ENCODE measurements at regions of chr13 and their contacts with region 1.

Region 1: GRCh38 chr13:32019612-32020233 is 11.9 kb upstream of the FRY start:
- DNase-seq: peak; percentile 40
- H3K4me3 ChIP-seq: no peak overlapping the region
- H3K27ac ChIP-seq: no peak overlapping the region
- H3K4me1 ChIP-seq: no peaks in the 10 kb centered on the region
- H3K27me3 ChIP-seq: no peaks in the 10 kb centered on the region
- CTCF ChIP-seq: peak; percentile 63

Region 2: GRCh38 chr13:31909864-31910551 is 109.7 kb before region 1 on chr13:
- intact Hi-C with region 1: loop called (anchors 10 kb)
- DNase-seq: peak; percentile 62
- H3K4me3 ChIP-seq: no peak overlapping the region
- H3K27ac ChIP-seq: no peak overlapping the region
- H3K4me1 ChIP-seq: no peaks in the 10 kb centered on the region
- H3K27me3 ChIP-seq: no peaks in the 10 kb centered on the region
- CTCF ChIP-seq: peak; percentile 79

Region 3: DNA sequence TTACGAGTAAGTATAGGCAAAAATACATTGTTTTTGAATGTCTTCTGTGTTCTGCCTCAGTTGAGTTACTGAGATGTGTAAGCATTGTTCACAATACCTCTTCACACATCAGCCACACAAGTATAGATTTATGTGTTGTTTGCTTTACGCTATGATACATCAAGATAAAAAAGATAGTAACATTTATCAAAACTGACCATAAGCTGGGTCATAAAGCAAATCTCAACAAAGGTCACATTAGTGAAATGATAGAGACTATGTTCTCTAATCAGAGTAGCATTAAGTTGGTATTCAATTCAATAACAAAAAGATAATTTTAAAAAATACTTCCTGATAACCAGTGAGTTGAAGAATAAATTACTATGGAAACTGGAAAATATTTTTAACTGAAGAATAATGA is 167.9 kb after region 1 on chr13:
- intact Hi-C with region 1: no loop called
- DNase-seq: no peak
- H3K4me3 ChIP-seq: no peak overlapping the region
- H3K27ac ChIP-seq: no peak overlapping the region
- H3K4me1 ChIP-seq: no peaks in the 10 kb centered on the region
- H3K27me3 ChIP-seq: no peaks in the 10 kb centered on the region
- CTCF ChIP-seq: no peak

Region 4: GRCh38 chr13:32246468-32246867 is 226.7 kb after region 1 on chr13:
- intact Hi-C with region 1: loop called (anchors 10 kb)
- DNase-seq: peak; percentile 63
- H3K4me3 ChIP-seq: no peak overlapping the region
- H3K27ac ChIP-seq: no peak overlapping the region
- H3K4me1 ChIP-seq: no peaks in the 10 kb centered on the region
- H3K27me3 ChIP-seq: no peaks in the 10 kb centered on the region
- CTCF ChIP-seq: peak; percentile 51

Region 5: DNA sequence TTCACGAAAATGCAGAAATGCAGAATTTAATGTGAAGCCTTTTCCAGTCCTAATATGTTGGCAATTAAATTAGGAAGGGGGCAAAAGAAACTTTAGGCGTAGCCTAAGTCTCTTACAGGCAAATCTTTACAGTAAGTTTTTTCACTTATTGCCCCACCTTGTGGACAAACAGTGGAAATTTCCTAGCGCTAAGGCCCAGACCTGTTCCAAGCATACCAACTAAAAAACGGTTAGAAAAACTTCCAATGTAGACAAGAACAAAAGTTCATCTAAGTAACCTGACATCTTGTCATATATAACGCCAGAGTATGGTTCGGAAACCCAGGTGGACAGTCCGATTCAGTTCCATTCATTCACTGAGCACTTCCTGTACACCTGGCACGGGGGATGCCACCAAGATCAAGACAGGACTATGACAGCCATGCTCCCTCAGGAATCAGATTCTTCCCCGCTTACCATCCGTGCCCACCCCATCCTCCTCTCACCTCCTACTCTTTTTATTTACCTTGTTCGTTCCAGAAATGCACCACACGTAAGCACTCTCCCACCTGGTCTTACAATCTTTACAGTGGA is 290.5 kb after region 1 on chr13:
- intact Hi-C with region 1: loop called (anchors 5 kb)
- DNase-seq: peak; percentile 30
- H3K4me3 ChIP-seq: no peak overlapping the region
- H3K27ac ChIP-seq: no peak overlapping the region
- H3K4me1 ChIP-seq: no peaks in the 10 kb centered on the region
- H3K27me3 ChIP-seq: no peaks in the 10 kb centered on the region
- CTCF ChIP-seq: peak; percentile 70